K562 (cell line): ENCODE measurements at regions of chr11 and their contacts with region 1.

Region 1: GRCh38 chr11:131674051-131674755 is 303.8 kb downstream of the NTM start:
- DNase-seq: peak; percentile 63 to 79 (median 72)
- ATAC-seq: peak; percentile 97
- H3K4me3 ChIP-seq: no peak overlapping the region
- H3K27ac ChIP-seq: no peak overlapping the region
- H3K4me1 ChIP-seq: no peaks in the 10 kb centered on the region
- H3K27me3 ChIP-seq: no peaks in the 10 kb centered on the region
- CTCF ChIP-seq: peak; percentile 78 to 93 (median 82)
- EP300 ChIP-seq: no peak
- POLR2A ChIP-seq: no peak
- RAD21 ChIP-seq: peak; percentile 68 to 84

Region 2: GRCh38 chr11:130916238-130916855 is 757.9 kb before region 1 on chr11 and contains the start of gene SNX19:
- CTCF ChIA-PET with region 1: no interaction called
- POLR2A ChIA-PET with region 1: no interaction called
- in situ Hi-C with region 1: loop called (anchors 25 kb)
- intact Hi-C with region 1: no loop called
- DNase-seq: peak; percentile 90 to 94 (median 92)
- ATAC-seq: peak; percentile 99
- H3K4me3 ChIP-seq: peak within 1 kb of the TSS; percentile 96
- H3K27ac ChIP-seq: peak within 1 kb of the TSS; percentile 83
- H3K4me1 ChIP-seq: peaks cover 13 to 18% of the 10 kb centered on the region in 2 experiments; a peak in 4 of 5 replicates
- H3K27me3 ChIP-seq: peaks cover 0 to 13% of the 10 kb centered on the region in 2 experiments; a peak in 2 of 5 replicates
- CTCF ChIP-seq: peak; percentile 89 to 91 (median 90)
- EP300 ChIP-seq: 0 out of 2 replicates have a peak, but pooled peaks have one; percentile 13
- POLR2A ChIP-seq: peak; percentile 91
- RAD21 ChIP-seq: peak in 1 of 2 experiments; percentile 23; a peak in 2 of 4 replicates
- polyA plus RNA-seq, gene SNX19: 2.2 to 4.4 TPM

Region 3: GRCh38 chr11:131070365-131070764 is 603.8 kb before region 1 on chr11:
- CTCF ChIA-PET with region 1: no interaction called
- POLR2A ChIA-PET with region 1: no interaction called
- in situ Hi-C with region 1: loop called (anchors 5 kb)
- intact Hi-C with region 1: no loop called
- DNase-seq: no peak
- ATAC-seq: no peak
- H3K4me3 ChIP-seq: no peak overlapping the region
- H3K27ac ChIP-seq: no peak overlapping the region
- H3K4me1 ChIP-seq: no peaks in the 10 kb centered on the region
- H3K27me3 ChIP-seq: no peaks in the 10 kb centered on the region
- CTCF ChIP-seq: 0 out of 6 replicates have a peak, but pooled peaks of 1 of the 3 experiments have one; percentile 9
- EP300 ChIP-seq: no peak
- POLR2A ChIP-seq: no peak
- RAD21 ChIP-seq: no peak

Region 4: DNA sequence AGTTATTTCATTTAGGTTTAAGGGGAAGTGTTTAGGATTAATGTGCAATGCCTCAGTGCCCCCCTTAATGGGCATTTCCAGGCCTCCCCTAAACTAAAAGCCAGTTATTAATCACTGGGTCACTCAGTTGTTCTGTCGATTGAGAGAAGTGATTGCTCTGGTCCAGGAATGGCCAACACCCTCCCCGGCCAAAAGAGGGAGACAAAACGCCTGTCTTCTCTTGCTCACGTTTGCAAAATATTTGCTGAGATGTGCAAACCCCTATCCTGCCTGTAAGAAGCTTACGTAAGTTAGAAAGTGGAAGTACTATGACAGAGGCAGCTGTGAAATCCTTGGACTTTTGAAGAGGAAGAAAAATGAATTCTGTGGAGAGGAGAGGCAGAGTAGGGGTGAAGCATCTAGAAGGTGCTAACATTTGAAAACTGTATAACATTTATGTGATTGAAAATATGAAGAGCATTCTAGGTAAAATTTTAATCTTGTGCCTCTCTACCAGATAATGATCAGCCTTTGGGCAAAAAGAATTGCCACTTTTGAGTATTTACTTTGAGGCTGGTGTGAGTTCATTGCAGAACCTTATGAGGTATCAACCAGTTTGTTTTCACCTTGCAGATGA is 266.1 kb before region 1 on chr11:
- CTCF ChIA-PET with region 1: no interaction called
- POLR2A ChIA-PET with region 1: interaction called, 3 read pairs
- in situ Hi-C with region 1: no loop called
- intact Hi-C with region 1: loop called (anchors 1 kb)
- DNase-seq: peak in 2 of 4 experiments; percentile 18 to 37
- ATAC-seq: peak; percentile 75
- H3K4me3 ChIP-seq: no peak overlapping the region
- H3K27ac ChIP-seq: no peak overlapping the region
- H3K4me1 ChIP-seq: no peaks in the 10 kb centered on the region
- H3K27me3 ChIP-seq: no peaks in the 10 kb centered on the region
- CTCF ChIP-seq: peak; percentile 42 to 54 (median 54); a peak in 5 of 6 replicates
- EP300 ChIP-seq: no peak
- POLR2A ChIP-seq: no peak
- RAD21 ChIP-seq: peak in 1 of 2 experiments; percentile 30; a peak in 2 of 4 replicates

Region 5: DNA sequence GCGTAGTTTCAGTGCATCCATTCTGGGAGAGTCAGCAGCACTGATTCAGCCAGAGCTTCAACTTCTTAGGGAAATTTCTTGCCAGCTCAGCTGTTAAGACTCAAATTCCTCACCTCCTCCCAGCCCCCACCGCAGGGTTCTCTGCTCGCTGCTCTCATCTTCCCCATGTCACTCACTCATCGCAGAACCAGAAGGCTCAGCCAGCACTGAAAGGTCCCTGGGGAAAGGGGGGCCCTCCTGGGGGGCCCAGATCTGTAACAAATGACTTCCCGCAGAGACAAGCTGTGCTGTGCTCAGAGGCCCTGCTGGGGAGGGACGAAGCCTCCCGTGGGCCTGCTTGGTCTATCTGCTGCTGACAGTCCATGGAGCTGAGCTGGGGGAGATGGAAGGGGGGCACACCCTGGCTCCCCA is 83.1 kb before region 1 on chr11:
- CTCF ChIA-PET with region 1: no interaction called
- POLR2A ChIA-PET with region 1: no interaction called
- in situ Hi-C with region 1: no loop called
- intact Hi-C with region 1: no loop called
- DNase-seq: no peak
- ATAC-seq: no peak
- H3K4me3 ChIP-seq: no peak overlapping the region
- H3K27ac ChIP-seq: no peak overlapping the region
- H3K4me1 ChIP-seq: no peaks in the 10 kb centered on the region
- H3K27me3 ChIP-seq: no peaks in the 10 kb centered on the region
- CTCF ChIP-seq: no peak
- EP300 ChIP-seq: no peak
- POLR2A ChIP-seq: no peak
- RAD21 ChIP-seq: no peak